Activated T-helper 2 cell treated with anti-CD3 and anti-CD28 coated beads, Interferon-gamma antibody, Interleukin-2, Interleukin-4, amounts not matched to agents 10 μg/mL and 5 μg/mL and 100 μg/mL, durations not matched to agents 14 hours and 24 hours and 36 hours (primary cell): ENCODE measurements at regions of chr21 and their contacts with region 1.

Region 1: DNA sequence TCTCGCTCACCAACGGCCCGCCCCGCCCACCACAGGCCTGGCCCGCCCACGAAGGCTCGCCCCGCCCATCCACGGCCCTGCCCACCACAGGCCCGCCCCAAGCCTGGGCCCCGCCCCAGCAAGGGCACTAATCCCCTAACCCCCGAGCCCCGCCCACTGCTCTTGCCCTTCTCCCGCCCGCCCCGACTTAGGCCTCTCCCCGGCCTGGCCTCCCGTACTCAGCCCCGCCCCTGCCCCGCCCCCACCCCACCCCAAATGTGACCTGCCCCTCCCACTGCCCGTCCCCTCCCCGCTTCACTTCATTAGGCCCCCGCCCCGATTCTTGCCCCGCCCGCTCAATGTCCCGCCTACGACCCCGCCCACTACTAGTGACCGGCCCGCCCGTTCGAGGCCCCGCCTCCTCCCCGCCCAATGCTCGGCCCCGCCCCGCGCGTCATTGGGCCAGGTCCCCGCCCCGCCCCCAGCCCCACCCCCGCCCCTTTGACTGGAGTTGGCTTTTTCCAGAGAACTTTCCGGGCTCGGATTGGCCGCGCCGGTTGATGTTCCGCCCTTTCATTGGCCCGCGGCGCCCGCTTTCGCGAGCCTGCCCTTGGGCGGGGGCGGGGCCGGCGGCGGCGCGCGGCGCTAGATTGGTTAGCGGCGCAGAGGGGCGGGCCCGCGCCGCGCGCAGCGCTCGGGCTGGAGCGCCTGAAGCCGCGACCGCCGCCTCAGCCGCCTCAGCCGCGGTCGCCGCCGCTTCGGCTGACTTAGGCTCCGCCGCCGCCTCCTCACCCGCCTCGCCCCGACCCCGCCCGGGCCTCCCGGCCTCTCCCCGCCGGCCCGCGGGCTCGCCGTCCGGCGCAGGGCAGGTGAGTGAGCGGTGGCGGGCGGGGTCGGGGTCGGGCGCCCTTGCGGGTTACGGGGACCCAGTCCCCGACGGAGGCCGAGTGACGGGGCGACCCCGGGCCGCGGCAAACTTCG is at the start of gene PCBP3:
- DNase-seq: peak; percentile 92
- H3K4me3 Mint-ChIP-seq: peak within 1 kb of the TSS; percentile 78
- H3K27ac Mint-ChIP-seq: no peak within 1 kb of the TSS
- H3K4me1 Mint-ChIP-seq: peaks cover 13% of the 10 kb centered on the region
- H3K27me3 Mint-ChIP-seq: peaks cover 8% of the 10 kb centered on the region
- total RNA-seq, gene PCBP3: 6.9 and 8.2 TPM in 2 replicates

Region 2: GRCh38 chr21:44817506-44817880 is 825.8 kb before region 1 on chr21:
- intact Hi-C with region 1: loop called (anchors 10 kb)
- DNase-seq: peak; percentile 92
- H3K4me3 Mint-ChIP-seq: peak overlapping the region; percentile 66
- H3K27ac Mint-ChIP-seq: no peak overlapping the region
- H3K4me1 Mint-ChIP-seq: peaks cover 7% of the 10 kb centered on the region
- H3K27me3 Mint-ChIP-seq: peaks cover 2% of the 10 kb centered on the region

Region 3: GRCh38 chr21:45287438-45288391 is 355.6 kb before region 1 on chr21 and contains the start of gene POFUT2:
- intact Hi-C with region 1: loop called (anchors 5 kb)
- DNase-seq: peak; percentile 97
- H3K4me3 Mint-ChIP-seq: peak within 1 kb of the TSS; percentile 80
- H3K27ac Mint-ChIP-seq: peak within 1 kb of the TSS; percentile 58
- H3K4me1 Mint-ChIP-seq: peaks cover 6% of the 10 kb centered on the region
- H3K27me3 Mint-ChIP-seq: no peaks in the 10 kb centered on the region
- total RNA-seq, gene POFUT2: 14.1 and 16.1 TPM in 2 replicates

Region 4: GRCh38 chr21:45542242-45542666 is 101.0 kb before region 1 on chr21 and contains the start of gene SLC19A1:
- intact Hi-C with region 1: no loop called
- DNase-seq: peak; percentile 70
- H3K4me3 Mint-ChIP-seq: peak within 1 kb of the TSS; percentile 79
- H3K27ac Mint-ChIP-seq: peak within 1 kb of the TSS; percentile 28
- H3K4me1 Mint-ChIP-seq: peaks cover 11% of the 10 kb centered on the region
- H3K27me3 Mint-ChIP-seq: no peaks in the 10 kb centered on the region
- total RNA-seq, gene SLC19A1: 68.1 and 72.7 TPM in 2 replicates

Region 5: DNA sequence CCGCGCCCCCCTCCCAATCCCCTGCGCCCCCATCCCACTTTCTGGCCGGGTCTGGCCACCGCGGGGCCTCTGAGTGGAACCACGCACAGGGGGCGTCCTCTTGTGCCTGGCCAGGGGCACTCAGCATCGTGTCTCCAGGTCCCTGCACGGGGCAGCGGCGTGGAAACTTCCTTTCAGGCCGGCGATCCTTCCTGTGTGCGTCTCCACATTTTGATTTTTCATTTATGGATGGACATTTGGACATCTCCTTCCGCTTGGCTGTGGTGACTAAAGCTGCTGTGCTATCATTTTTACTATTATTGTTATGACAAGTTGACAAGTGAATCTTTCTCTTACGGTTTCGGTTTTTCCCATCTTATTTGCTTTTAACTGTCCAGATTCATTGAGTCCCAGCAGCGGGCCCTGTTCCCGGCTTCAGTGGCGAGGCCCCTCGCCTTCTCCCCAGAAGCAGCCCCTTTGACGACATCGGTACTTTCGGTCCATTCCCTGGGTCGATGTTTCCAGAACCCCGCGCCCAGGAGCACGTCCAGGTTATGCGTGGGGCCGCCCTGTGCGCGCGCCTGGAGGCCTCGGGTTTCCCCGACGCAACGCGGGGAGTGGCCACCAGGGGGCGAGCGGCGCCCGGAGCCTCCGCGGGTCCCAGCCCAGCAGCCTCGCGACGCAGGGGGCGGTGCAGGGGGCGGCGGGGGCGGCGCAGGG is 88.7 kb before region 1 on chr21:
- intact Hi-C with region 1: loop called (anchors 1 kb)
- DNase-seq: peak; percentile 82
- H3K4me3 Mint-ChIP-seq: peak overlapping the region; percentile 90
- H3K27ac Mint-ChIP-seq: peak overlapping the region; percentile 89
- H3K4me1 Mint-ChIP-seq: peaks cover 23% of the 10 kb centered on the region
- H3K27me3 Mint-ChIP-seq: no peaks in the 10 kb centered on the region

Region 6: DNA sequence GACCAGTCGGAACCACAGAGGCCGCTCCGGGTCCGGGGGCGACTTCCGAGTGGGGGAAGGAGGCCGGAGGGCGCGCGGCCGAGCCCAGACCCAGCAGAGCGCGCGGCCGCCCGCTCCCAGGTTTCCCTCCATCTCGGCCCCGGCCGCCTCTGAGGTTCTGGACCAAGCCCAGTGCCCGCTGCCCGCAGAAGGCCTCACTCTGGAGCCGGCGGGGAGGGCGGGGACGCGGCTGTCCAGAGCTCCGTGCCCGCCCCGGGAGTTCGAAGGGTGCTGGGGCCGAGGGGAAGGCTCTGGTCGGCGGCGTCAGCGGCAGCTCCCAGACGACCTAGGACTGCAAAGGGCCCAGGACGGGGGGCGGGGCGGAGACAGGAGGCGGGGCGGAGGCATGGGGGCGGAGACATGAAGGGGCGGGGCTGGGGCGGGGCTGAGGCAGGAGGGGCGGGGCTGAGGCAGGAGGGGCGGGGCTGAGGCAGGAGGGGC is 53.0 kb before region 1 on chr21:
- intact Hi-C with region 1: loop called (anchors 1 kb)
- DNase-seq: peak; percentile 66
- H3K4me3 Mint-ChIP-seq: no peak overlapping the region
- H3K27ac Mint-ChIP-seq: no peak overlapping the region
- H3K4me1 Mint-ChIP-seq: peaks cover 8% of the 10 kb centered on the region
- H3K27me3 Mint-ChIP-seq: peaks cover 21% of the 10 kb centered on the region

Region 7: GRCh38 chr21:45632160-45632559 is 11.1 kb before region 1 on chr21:
- intact Hi-C with region 1: no loop called
- DNase-seq: no peak
- H3K4me3 Mint-ChIP-seq: no peak overlapping the region
- H3K27ac Mint-ChIP-seq: no peak overlapping the region
- H3K4me1 Mint-ChIP-seq: no peaks in the 10 kb centered on the region
- H3K27me3 Mint-ChIP-seq: peaks cover 9% of the 10 kb centered on the region

Region 8: GRCh38 chr21:45768751-45769070 is 125.4 kb after region 1 on chr21:
- intact Hi-C with region 1: loop called (anchors 1 kb)
- DNase-seq: no peak
- H3K4me3 Mint-ChIP-seq: no peak overlapping the region
- H3K27ac Mint-ChIP-seq: peak overlapping the region; percentile 82
- H3K4me1 Mint-ChIP-seq: peaks cover 44% of the 10 kb centered on the region
- H3K27me3 Mint-ChIP-seq: no peaks in the 10 kb centered on the region